ENCODE measurements at regions of chr18 and their contacts with region 1.

Region 1: GRCh38 chr18:63936156-63936931 is 12.8 kb upstream of the HMSD start:
- DNase-seq: peak; percentile 88
- CTCF ChIP-seq: peak; percentile 74

Region 2: DNA sequence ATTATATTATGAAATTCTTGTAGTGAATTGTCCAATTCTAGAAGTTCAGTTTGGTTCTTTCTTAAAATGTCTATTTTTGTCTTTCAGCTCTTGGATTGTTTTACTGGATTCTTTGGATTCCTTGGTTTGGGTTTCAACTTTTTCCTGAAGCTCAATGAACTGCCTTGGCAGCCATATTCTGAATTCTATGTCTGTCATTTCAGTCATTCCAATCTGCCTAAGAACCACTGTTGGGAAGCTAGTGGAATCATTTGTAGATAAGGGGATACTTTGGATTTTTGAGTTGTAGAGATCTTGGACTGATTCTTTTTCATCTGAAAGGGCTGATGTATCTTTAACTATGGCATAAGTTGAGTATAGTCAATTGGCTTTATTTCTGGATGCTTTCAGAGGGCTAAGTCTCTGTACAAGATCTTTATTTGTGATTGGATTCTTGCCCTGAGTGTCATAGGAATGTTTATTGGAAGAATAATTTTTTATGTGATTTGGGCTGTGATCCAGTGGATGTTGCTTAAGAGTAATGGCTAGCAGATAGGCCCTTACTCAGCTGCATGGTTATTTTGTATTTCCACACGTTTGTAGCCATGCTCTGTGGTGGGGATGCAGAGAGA is 118.8 kb before region 1 on chr18:
- CTCF ChIA-PET with region 1: interaction called, 32 read pairs
- POLR2A ChIA-PET with region 1: no interaction called
- DNase-seq: no peak
- CTCF ChIP-seq: no peak

Region 3: GRCh38 chr18:63831080-63831788 is 105.1 kb before region 1 on chr18:
- CTCF ChIA-PET with region 1: interaction called, 13 read pairs
- POLR2A ChIA-PET with region 1: no interaction called
- DNase-seq: peak; percentile 20
- CTCF ChIP-seq: no peak

Region 4: GRCh38 chr18:63890950-63891304 is 45.4 kb before region 1 on chr18:
- CTCF ChIA-PET with region 1: interaction called, 38 read pairs
- POLR2A ChIA-PET with region 1: no interaction called
- DNase-seq: peak; percentile 48
- CTCF ChIP-seq: peak; percentile 54

Region 5: DNA sequence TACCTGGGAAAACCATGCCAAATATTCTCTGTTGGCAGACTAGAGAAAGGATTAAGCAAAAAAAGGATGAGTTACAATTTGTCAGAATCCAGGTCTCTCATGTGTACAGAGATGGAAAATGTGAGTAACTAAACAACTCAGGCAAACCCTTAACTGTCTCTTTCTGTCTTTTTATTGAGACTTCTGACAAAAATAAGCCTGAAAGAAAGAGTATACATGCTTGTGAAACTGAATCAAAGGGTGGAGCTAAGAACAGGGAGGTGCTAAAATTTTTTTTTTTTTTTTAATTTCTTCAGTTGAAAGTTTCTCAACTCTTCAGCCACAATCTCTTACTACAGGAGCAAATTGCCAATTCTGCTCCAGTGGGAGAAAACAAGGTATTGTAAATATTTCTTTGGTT is 28.7 kb before region 1 on chr18 and contains the start of gene SERPINB10:
- CTCF ChIA-PET with region 1: interaction called, 52 read pairs
- POLR2A ChIA-PET with region 1: no interaction called
- DNase-seq: peak; percentile 34
- CTCF ChIP-seq: no peak

Region 6: DNA sequence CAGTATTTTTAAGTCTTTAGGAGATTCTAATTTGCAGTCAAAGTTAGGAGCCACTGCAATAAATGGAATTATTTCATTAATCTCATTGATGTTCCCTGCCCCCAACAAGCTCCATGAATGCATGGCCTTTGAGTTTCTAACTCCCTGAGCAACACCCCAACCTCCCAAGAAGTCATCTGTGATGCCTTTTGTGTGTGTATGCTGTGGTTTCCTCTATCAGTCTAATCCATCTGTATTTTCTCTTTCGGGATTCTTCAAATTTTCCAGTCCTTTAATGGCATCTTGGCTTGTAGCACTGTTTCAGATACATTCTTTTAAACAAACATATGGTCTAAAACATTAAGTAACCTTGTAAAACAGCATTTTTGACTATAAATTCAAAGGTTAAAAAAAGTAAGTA is 11.8 kb before region 1 on chr18:
- CTCF ChIA-PET with region 1: interaction called, 56 read pairs
- POLR2A ChIA-PET with region 1: no interaction called
- DNase-seq: no peak
- CTCF ChIP-seq: no peak

Region 7: GRCh38 chr18:63963615-63964256 is 27.4 kb after region 1 on chr18:
- CTCF ChIA-PET with region 1: interaction called, 83 read pairs
- POLR2A ChIA-PET with region 1: no interaction called
- DNase-seq: peak; percentile 33
- CTCF ChIP-seq: peak; percentile 82

Measured in GM10248 (cell line).